Thyroid gland (tissue), 4 donors: ENCODE measurements at regions of chr5 and their contacts with region 1.

Region 1: GRCh38 chr5:97183100-97183929 is at the start of gene RIOK2:
- DNase-seq: peak; percentile 94 to 96
- H3K4me3 ChIP-seq: peak within 1 kb of the TSS; percentile 30 to 100 (median 61)
- H3K27ac ChIP-seq: peak within 1 kb of the TSS; percentile 73 to 91 (median 90)
- H3K4me1 ChIP-seq: peaks cover 16 to 19% of the 10 kb centered on the region in 2 donors
- H3K27me3 ChIP-seq: no peaks in the 10 kb centered on the region
- CTCF ChIP-seq: peak in 1 of 6 experiments; percentile 26
- POLR2A ChIP-seq: peak in 1 of 2 donors; percentile 64
- total RNA-seq, gene RIOK2: 11.0 to 19.2 (median 15.9) TPM

Region 2: DNA sequence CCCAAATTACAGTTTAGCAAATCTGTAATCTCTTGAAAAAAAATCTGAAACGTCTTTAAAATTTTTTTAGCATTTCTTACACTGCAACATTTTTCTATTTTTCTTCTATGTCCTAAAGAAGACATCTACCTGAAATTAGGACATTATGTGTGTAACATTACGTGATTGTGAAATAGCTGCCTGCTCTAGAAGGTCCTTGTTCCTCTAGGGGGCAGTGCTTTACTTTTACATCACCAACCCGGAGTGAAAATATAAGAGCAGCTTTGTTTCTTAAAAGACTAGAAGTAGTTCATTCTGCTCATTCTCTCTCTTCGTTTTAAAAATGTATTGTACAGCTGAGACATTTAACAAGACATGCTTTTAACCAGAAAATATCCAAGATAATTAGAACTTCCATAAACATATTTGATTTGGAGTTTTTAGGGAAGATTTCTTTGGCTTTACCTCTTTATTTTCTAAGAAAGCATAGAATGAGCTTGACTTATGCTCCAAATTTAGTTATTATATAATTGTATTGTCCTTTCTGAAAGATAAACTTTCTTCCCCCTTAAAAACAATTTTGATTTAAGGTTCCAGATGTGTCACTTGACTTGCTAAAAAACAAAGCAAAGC is 47.8 kb after region 1 on chr5:
- intact Hi-C with region 1: no loop called
- DNase-seq: peak; percentile 19 to 25
- H3K4me3 ChIP-seq: no peak overlapping the region
- H3K27ac ChIP-seq: no peak overlapping the region
- H3K4me1 ChIP-seq: no peaks in the 10 kb centered on the region
- H3K27me3 ChIP-seq: no peaks in the 10 kb centered on the region
- CTCF ChIP-seq: peak; percentile 44 to 80 (median 58)
- POLR2A ChIP-seq: no peak

Region 3: DNA sequence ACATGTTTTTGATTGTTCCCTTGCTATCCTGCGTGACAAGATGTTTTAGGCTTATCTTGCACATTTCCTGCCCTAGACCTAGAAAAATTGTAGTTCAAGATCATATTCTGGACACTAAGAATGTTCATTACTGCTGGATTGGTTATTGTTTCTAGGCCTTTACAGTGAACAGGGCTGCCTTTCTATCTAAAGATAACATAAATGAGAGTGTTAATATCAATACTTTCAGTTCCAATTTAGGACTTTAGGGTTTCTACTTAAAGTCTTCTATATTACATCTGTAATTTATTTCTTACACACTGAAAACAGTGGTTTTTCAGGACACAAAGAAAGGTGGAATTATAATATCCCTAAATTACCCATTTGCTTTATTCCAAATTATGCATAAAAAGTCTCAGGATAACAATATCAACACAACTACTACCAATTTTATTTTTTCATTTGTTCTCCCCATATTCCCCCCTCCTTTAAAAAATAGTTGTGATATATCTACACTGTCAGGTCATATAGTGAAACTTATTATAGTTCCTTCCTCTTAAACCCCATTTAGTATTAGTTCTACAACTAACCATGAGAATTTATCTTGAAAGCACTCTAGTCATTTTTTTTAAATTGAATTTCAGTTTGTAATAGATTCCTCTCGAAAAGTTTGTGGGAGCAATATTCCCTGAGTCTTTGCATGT is 293.7 kb after region 1 on chr5:
- intact Hi-C with region 1: no loop called
- DNase-seq: no peak
- H3K4me3 ChIP-seq: no peak overlapping the region
- H3K27ac ChIP-seq: no peak overlapping the region
- H3K4me1 ChIP-seq: no peaks in the 10 kb centered on the region
- H3K27me3 ChIP-seq: no peaks in the 10 kb centered on the region
- CTCF ChIP-seq: no peak
- POLR2A ChIP-seq: no peak

Region 4: DNA sequence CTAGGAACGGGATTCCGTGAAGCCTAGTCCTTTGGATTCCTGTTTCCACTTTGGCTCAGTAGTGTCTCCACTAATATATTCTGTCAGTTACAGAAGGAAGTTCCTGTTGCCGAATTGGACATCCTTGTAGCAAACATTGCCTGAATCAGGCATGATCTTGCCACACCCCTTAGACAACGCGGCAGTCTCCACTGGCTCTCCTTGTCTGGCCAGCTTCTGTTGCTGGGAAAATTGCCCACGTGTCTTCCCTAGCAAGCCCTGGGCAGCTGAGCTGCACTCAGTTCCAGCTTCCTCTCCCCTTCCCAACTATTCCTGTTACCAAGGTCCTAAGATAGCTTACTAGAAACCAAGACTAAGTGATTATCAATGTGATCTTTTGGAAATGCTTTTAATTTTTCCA is 316.3 kb after region 1 on chr5:
- intact Hi-C with region 1: no loop called
- DNase-seq: no peak
- H3K4me3 ChIP-seq: no peak overlapping the region
- H3K27ac ChIP-seq: no peak overlapping the region
- H3K4me1 ChIP-seq: no peaks in the 10 kb centered on the region
- H3K27me3 ChIP-seq: no peaks in the 10 kb centered on the region
- CTCF ChIP-seq: no peak
- POLR2A ChIP-seq: no peak

Region 5: DNA sequence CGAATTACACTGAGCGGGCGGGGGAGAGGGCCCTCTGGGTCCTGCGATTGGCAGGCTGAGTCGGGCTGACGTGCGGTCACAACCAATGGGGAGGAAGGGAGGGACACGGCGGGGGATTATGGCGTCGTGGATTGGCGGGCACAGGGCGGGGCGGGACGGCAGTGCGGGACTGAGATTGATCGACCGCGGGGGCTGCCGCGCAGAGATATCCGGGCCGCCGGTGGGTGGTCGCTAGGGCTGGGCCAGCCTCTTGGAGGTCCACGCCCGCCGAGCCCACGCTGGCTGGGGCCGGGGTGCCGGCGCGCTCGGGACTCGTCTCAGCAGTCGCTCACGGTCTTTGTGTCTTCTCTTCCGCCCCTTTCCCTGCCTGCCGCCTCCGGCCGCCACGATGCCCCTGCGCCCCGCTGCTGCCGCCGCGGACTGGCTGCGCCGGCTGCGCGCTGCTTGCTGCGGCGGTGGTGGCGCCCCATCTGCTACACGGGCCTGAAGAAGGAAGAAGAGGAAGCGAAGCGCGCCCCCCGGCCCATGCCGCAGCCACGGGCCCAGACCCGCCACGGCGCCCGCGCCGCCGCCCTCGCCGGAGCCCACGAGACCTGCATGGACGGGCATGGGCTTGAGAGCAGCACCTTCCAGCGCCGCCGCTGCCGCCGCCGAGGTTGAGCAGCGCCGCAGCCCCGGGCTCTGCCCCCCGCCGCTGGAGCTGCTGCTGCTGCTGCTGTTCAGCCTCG is 1590.3 kb after region 1 on chr5 and contains the start of gene RGMB:
- intact Hi-C with region 1: loop called (anchors 5 kb)
- DNase-seq: peak; percentile 99
- H3K4me3 ChIP-seq: peak within 1 kb of the TSS; percentile 74 to 90 (median 77)
- H3K27ac ChIP-seq: peak within 1 kb of the TSS; percentile 88 to 95 (median 94)
- H3K4me1 ChIP-seq: peaks cover 20 to 22% of the 10 kb centered on the region in 2 donors
- H3K27me3 ChIP-seq: no peaks in the 10 kb centered on the region
- CTCF ChIP-seq: no peak
- POLR2A ChIP-seq: peak; percentile 93 to 99
- total RNA-seq, gene RGMB: 25.3 to 29.7 (median 27.5) TPM